Tibial artery (tissue), 4 donors: ENCODE measurements at regions of chr16 and their contacts with region 1.

Region 1: GRCh38 chr16:80940069-80940856 is 66.4 kb downstream of the CMC2 start:
- DNase-seq: no peak
- H3K4me3 ChIP-seq: no peak overlapping the region
- H3K27ac ChIP-seq: no peak overlapping the region
- H3K4me1 ChIP-seq: peaks cover 0 to 16% (median 14%) of the 10 kb centered on the region in 4 donors
- H3K27me3 ChIP-seq: no peaks in the 10 kb centered on the region
- CTCF ChIP-seq: no peak

Region 2: DNA sequence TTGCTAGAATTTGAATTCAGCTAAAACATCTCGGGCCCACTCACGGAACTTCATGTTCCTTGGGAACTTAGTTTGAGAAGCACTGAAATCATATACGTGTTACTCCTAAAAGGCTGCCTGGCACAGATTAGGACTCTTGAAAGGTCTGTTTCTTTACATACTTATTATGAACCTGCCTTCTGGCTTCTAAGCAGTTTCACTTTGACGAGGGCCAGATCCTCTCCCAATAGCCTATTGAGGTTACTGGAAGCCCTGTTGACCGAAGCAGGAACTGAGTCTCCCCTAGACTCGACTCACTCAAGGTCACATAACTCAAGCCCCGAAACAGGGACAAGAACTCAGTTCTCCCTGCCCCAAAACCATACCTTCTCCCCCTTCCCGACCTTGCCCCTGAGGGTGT is 717.0 kb after region 1 on chr16:
- intact Hi-C with region 1: loop called (anchors 5 kb)
- DNase-seq: no peak
- H3K4me3 ChIP-seq: no peak overlapping the region
- H3K27ac ChIP-seq: no peak overlapping the region
- H3K4me1 ChIP-seq: peaks cover 0 to 4% (median 0%) of the 10 kb centered on the region in 4 donors
- H3K27me3 ChIP-seq: no peaks in the 10 kb centered on the region
- CTCF ChIP-seq: no peak